ENCODE measurements at regions of chr6 and their contacts with region 1.

Region 1: GRCh38 chr6:30061092-30061857 is at the start of gene POLR1H:
- DNase-seq: peak; percentile 88 to 99 (median 92)

Region 2: GRCh38 chr6:30326526-30327260 is 265.4 kb after region 1 on chr6 and contains the start of gene TRIM39:
- intact Hi-C with region 1: loop called (anchors 5 kb)
- DNase-seq: peak; percentile 76 to 98 (median 88)

Region 3: GRCh38 chr6:30411515-30412207 is 350.4 kb after region 1 on chr6:
- intact Hi-C with region 1: no loop called
- DNase-seq: peak in 9 of 10 donors; percentile 36 to 92 (median 55)

Region 4: GRCh38 chr6:31143148-31143547 is 1081.9 kb after region 1 on chr6:
- intact Hi-C with region 1: no loop called
- DNase-seq: peak in 1 of 10 donors; percentile 79

Measured in posterior cingulate gyrus (tissue), 11 donors.